Panc1 (cell line): ENCODE measurements at regions of chr9 and their contacts with region 1.

Region 1: GRCh38 chr9:72271613-72272478 is 93.2 kb downstream of the ZFAND5 start:
- DNase-seq: peak; percentile 22
- ATAC-seq: peak; percentile 81; the same call in 1 of the 2 replicates
- H3K4me3 ChIP-seq: no peak overlapping the region
- H3K27ac ChIP-seq: no peak overlapping the region
- H3K4me1 ChIP-seq: no peaks in the 10 kb centered on the region
- H3K27me3 ChIP-seq: no peaks in the 10 kb centered on the region
- CTCF ChIP-seq: peak; percentile 76

Region 2: DNA sequence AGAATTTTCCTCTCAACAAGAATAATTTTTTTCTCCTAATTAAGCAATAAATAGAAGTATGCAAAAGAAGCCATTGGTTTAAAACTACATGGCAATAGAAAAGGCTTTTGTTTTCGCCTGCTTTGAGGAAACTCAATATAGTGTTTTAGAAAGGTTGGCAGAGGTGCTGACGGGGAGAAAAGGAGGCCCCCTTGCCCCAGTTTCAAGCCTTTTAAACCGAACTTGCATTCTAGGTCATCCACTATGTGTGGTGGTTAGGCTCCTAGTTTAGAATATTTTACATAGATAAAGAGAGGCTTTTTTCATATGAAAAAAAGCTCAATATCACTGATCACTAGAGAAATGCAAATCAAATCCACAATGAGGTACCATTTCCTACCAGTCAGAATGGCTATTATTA is 470.0 kb before region 1 on chr9:
- CTCF ChIA-PET with region 1: no interaction called
- POLR2A ChIA-PET with region 1: no interaction called
- in situ Hi-C with region 1: no loop called
- intact Hi-C with region 1: loop called (anchors 5 kb)
- DNase-seq: no peak
- ATAC-seq: no peak
- H3K4me3 ChIP-seq: no peak overlapping the region
- H3K27ac ChIP-seq: no peak overlapping the region
- H3K4me1 ChIP-seq: peaks cover 2% of the 10 kb centered on the region
- H3K27me3 ChIP-seq: no peaks in the 10 kb centered on the region
- CTCF ChIP-seq: no peak

Region 3: GRCh38 chr9:72203205-72203803 is 68.5 kb before region 1 on chr9:
- CTCF ChIA-PET with region 1: no interaction called
- POLR2A ChIA-PET with region 1: no interaction called
- in situ Hi-C with region 1: no loop called
- intact Hi-C with region 1: loop called (anchors 5 kb)
- DNase-seq: peak; percentile 18
- ATAC-seq: peak; percentile 92
- H3K4me3 ChIP-seq: no peak overlapping the region
- H3K27ac ChIP-seq: no peak overlapping the region
- H3K4me1 ChIP-seq: no peaks in the 10 kb centered on the region
- H3K27me3 ChIP-seq: no peaks in the 10 kb centered on the region
- CTCF ChIP-seq: peak; percentile 77